ENCODE measurements at regions of chr4 and their contacts with region 1.

Region 1: DNA sequence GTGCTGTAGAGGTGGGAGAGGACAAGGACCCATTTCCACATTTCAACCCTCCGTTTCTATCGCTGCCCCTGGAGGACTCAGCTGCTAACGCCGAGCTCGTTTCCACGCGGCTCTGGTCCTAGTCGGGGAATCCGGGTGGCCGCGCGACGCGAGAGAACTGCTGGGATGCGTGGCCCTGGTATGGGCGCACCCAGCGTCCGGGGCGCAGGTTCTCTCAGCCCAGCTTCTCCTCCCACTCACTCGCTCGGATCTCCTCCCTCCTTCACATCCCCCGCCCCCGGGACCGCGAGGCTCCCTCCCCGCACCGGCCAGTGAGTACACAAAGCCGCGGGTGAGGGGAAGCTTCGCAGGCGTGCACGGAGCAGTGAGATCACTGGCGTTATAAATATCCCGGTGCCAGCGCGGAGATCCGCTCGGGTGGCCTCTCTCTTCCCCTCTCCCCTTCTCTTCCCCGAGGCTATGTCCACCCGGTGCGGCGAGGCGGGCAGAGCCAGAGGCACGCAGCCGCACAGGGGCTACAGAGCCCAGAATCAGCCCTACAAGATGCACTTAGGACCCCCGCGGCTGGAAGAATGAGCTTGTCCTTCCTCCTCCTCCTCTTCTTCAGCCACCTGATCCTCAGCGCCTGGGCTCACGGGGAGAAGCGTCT is at the start of gene FGF5:
- DNase-seq: peak; percentile 83
- H3K4me3 ChIP-seq: peak within 1 kb of the TSS; percentile 87 to 91
- H3K27ac ChIP-seq: peak within 1 kb of the TSS; percentile 81 to 99
- H3K4me1 ChIP-seq: peaks cover 6 to 12% of the 10 kb centered on the region in 2 experiments; a peak in 1 of 4 replicates
- H3K27me3 ChIP-seq: no peaks in the 10 kb centered on the region
- CTCF ChIP-seq: no peak
- EP300 ChIP-seq: peak in 1 of 2 experiments; percentile 56; a peak in 1 of 4 replicates
- RAD21 ChIP-seq: no peak
- polyA plus RNA-seq, gene FGF5: 17.7 and 22.8 TPM in 2 replicates

Region 2: DNA sequence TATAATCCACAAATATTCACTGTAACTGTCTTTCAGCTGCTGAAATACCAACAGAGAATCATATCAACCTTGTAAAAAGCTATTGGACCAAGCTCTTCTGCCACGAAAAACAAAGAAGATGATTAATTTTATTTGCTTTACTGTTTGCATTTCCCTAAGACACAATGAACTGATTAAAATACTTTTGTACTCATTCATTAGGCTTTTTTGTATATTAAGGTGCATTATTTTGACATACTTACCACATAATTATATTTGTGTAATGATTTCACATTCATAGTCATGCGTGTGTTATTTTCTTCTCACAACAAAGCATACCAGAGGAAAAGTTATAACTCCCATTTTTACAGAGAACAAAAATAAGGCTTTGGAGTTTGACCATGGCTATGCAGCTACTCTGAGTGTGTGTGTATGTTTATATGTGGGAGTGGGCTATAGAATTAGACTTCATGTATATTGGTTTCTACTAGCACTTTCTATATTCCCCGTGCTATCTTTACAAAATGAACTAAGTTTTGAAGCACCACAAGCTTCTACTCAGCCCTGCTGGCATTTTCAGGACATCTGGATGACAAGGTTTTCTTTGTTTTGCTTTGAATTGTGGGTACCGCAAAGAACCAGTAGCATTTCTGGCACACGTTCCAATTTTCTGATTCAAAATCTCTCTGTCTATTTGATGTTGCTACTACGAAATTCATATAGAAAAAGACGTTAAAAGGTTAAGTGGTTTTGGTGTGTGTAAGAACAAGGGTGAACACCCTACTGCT is 10.9 kb before region 1 on chr4:
- CTCF ChIA-PET with region 1: interaction called, 11 read pairs
- POLR2A ChIA-PET with region 1: no interaction called
- DNase-seq: no peak
- H3K4me3 ChIP-seq: no peak overlapping the region
- H3K27ac ChIP-seq: peak overlapping the region in 1 of 2 experiments; percentile 65; a peak in 2 of 4 replicates
- H3K4me1 ChIP-seq: peaks cover 0 to 4% of the 10 kb centered on the region in 2 experiments; a peak in 1 of 4 replicates
- H3K27me3 ChIP-seq: no peaks in the 10 kb centered on the region
- CTCF ChIP-seq: no peak
- EP300 ChIP-seq: 0 out of 4 replicates have a peak, but pooled peaks of 1 of the 2 experiments have one; percentile 18
- RAD21 ChIP-seq: no peak